ENCODE measurements at regions of chr2 and their contacts with region 1.

Region 1: GRCh38 chr2:133844214-133844892 is 276.1 kb upstream of the NCKAP5 start:
- DNase-seq: peak in 1 of 2 experiments; percentile 39
- H3K4me3 ChIP-seq: no peak overlapping the region
- H3K27ac ChIP-seq: no peak overlapping the region
- H3K4me1 ChIP-seq: no peaks in the 10 kb centered on the region
- H3K27me3 ChIP-seq: peaks cover 13% of the 10 kb centered on the region; the same call in 1 of the 2 replicates
- CTCF ChIP-seq: peak; percentile 87

Region 2: GRCh38 chr2:133517876-133518275 is 326.5 kb before region 1 on chr2:
- CTCF ChIA-PET with region 1: no interaction called
- POLR2A ChIA-PET with region 1: no interaction called
- intact Hi-C with region 1: loop called (anchors 5 kb)
- DNase-seq: no peak
- H3K4me3 ChIP-seq: no peak overlapping the region
- H3K27ac ChIP-seq: no peak overlapping the region
- H3K4me1 ChIP-seq: no peaks in the 10 kb centered on the region
- H3K27me3 ChIP-seq: peaks cover 20% of the 10 kb centered on the region; the same call in 1 of the 2 replicates
- CTCF ChIP-seq: no peak